Activated CD4-positive, alpha-beta T cell treated with anti-CD3 and anti-CD28 coated beads for 36 hours (primary cell): ENCODE measurements at regions of chr1 and their contacts with region 1.

Region 1: GRCh38 chr1:54800899-54801759 is at the start of gene TTC22:
- DNase-seq: peak; percentile 87
- ATAC-seq: peak; percentile 60
- H3K4me3 Mint-ChIP-seq: peak within 1 kb of the TSS; percentile 77
- H3K27ac Mint-ChIP-seq: peak within 1 kb of the TSS; percentile 86
- H3K4me1 Mint-ChIP-seq: peaks cover 55% of the 10 kb centered on the region
- H3K27me3 Mint-ChIP-seq: no peaks in the 10 kb centered on the region
- total RNA-seq, gene TTC22: 4.1 to 4.2 TPM

Region 2: DNA sequence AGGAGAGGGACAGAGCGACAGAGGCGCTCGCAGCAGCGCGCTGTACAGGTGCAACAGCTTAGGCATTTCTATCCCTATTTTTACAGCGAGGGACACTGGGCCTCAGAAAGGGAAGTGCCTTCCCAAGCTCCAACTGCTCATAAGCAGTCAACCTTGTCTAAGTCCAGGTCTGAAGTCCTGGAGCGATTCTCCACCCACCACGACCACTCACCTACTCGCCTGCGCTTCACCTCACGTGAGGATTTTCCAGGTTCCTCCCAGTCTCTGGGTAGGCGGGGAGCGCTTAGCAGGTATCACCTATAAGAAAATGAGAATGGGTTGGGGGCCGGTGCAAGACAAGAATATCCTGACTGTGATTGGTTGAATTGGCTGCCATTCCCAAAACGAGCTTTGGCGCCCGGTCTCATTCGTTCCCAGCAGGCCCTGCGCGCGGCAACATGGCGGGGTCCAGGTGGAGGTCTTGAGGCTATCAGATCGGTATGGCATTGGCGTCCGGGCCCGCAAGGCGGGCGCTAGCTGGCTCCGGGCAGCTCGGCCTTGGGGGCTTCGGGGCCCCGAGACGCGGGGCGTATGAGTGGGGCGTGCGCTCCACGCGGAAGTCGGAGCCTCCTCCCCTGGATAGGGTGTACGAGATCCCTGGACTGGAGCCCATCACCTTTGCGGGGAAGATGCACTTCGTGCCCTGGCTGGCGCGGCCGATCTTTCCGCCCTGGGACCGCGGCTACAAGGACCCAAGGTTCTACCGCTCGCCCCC is 601.2 kb before region 1 on chr1 and contains the starts of genes CYB5RL and MRPL37:
- CTCF ChIA-PET with region 1: no interaction called
- POLR2A ChIA-PET with region 1: interaction called, 3 read pairs
- intact Hi-C with region 1: loop called in 1 of 2 experiments (anchors 10 kb)
- DNase-seq: peak; percentile 94
- ATAC-seq: peak; percentile 99
- H3K4me3 Mint-ChIP-seq: peak within 1 kb of the TSS; percentile 83
- H3K27ac Mint-ChIP-seq: peak within 1 kb of the TSS; percentile 84
- H3K4me1 Mint-ChIP-seq: peaks cover 30% of the 10 kb centered on the region
- H3K27me3 Mint-ChIP-seq: no peaks in the 10 kb centered on the region
- total RNA-seq, gene CYB5RL: 13.1 to 13.5 TPM
- total RNA-seq, gene MRPL37: 177 to 189 TPM

Region 3: GRCh38 chr1:54355931-54356679 is 445.0 kb before region 1 on chr1:
- CTCF ChIA-PET with region 1: no interaction called
- POLR2A ChIA-PET with region 1: no interaction called
- intact Hi-C with region 1: loop called in 1 of 2 experiments (anchors 5 kb)
- DNase-seq: peak; percentile 33
- ATAC-seq: no peak
- H3K4me3 Mint-ChIP-seq: peak overlapping the region; percentile 77
- H3K27ac Mint-ChIP-seq: peak overlapping the region; percentile 95
- H3K4me1 Mint-ChIP-seq: peaks cover 89% of the 10 kb centered on the region
- H3K27me3 Mint-ChIP-seq: no peaks in the 10 kb centered on the region

Region 4: GRCh38 chr1:54499360-54500106 is 301.6 kb before region 1 on chr1:
- CTCF ChIA-PET with region 1: interaction called, 3 read pairs
- POLR2A ChIA-PET with region 1: no interaction called
- intact Hi-C with region 1: loop called in 1 of 2 experiments (anchors 10 kb)
- DNase-seq: peak; percentile 60
- ATAC-seq: peak; percentile 80
- H3K4me3 Mint-ChIP-seq: peak overlapping the region; percentile 57
- H3K27ac Mint-ChIP-seq: no peak overlapping the region
- H3K4me1 Mint-ChIP-seq: peaks cover 5% of the 10 kb centered on the region
- H3K27me3 Mint-ChIP-seq: peaks cover 16% of the 10 kb centered on the region

Region 5: DNA sequence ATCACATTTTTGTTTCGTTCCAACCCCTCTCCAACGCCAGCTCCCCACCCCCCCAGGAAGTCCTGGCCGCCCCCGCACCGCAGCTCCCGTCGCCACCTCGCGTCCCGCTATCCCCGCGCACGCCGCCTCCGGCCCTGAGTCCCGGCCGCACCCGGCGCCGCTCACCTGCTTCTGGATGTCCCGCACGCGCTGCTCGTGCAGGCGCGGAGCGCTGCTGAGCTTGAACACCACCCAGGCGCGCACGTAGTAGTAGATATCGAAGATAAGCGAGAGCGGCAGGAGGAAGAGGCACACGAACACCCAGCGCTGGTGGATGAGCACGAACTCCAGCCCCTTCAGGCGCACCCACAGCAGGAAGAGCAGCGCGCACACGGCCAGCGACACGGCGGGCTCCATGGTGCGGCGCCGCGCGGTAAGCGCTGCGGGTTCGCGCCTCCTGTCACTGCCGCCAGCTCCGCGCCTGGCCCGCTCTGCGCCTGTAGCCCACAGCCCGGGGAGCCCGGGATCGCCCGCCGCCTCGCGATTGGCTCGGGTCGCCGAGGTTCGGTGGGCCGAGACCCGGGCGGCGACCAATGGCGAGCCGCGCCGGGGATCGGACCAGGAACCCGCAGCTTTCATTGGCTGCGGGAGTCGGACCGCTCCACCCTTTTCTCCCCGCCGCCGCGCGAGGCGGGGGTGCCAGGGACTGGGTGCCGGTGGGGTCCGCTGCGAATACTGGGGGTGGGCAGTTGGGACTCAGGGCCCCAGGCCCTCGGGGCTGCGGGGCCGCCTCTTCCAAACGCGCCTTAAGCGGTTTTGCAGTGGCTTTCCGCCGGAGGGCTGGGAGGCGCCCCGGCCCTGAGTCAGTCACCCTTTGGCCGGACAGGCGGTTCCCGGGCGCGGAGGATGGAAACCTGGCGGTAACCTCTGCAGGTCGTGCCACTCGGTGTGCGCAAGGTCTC is 85.9 kb after region 1 on chr1 and contains the start of gene DHCR24:
- CTCF ChIA-PET with region 1: interaction called, 3 read pairs
- POLR2A ChIA-PET with region 1: no interaction called
- intact Hi-C with region 1: loop called in 1 of 2 experiments (anchors 1 kb)
- DNase-seq: peak; percentile 88
- ATAC-seq: peak; percentile 96
- H3K4me3 Mint-ChIP-seq: peak within 1 kb of the TSS; percentile 89
- H3K27ac Mint-ChIP-seq: peak within 1 kb of the TSS; percentile 84
- H3K4me1 Mint-ChIP-seq: peaks cover 39% of the 10 kb centered on the region
- H3K27me3 Mint-ChIP-seq: peaks cover 8% of the 10 kb centered on the region
- total RNA-seq, gene DHCR24: 78.4 to 80.6 TPM

Region 6: DNA sequence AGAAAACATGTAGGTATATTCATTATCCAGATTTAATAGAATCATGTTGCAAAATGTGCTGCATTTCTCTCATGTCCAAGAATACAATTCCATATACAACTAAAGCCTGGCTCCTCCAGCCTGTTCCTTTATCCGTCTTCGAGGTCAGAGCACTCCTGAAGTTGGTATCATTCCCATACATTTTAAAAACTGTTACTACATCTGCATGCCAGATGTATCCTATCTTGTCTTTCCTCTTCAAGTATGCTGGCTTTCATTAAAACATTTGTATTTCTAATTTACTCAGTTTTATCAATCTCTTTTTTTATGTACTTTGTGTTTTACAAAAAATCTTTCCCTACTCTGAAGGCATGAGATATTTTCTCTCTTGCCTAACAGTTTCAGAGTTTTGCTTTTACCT is 950.6 kb after region 1 on chr1:
- CTCF ChIA-PET with region 1: no interaction called
- POLR2A ChIA-PET with region 1: no interaction called
- intact Hi-C with region 1: no loop called
- DNase-seq: no peak
- ATAC-seq: no peak
- H3K4me3 Mint-ChIP-seq: no peak overlapping the region
- H3K27ac Mint-ChIP-seq: no peak overlapping the region
- H3K4me1 Mint-ChIP-seq: no peaks in the 10 kb centered on the region
- H3K27me3 Mint-ChIP-seq: peaks cover 9% of the 10 kb centered on the region